ENCODE measurements at regions of chr3 and their contacts with region 1.

Region 1: GRCh38 chr3:177050501-177051237 is 146.6 kb downstream of the TBL1XR1 start:
- DNase-seq: peak in 2 of 35 experiments; percentile 8 to 77
- ATAC-seq: peak; percentile 63 to 87 (median 66)
- H3K4me3 ChIP-seq: no peak overlapping the region
- H3K4me3 Mint-ChIP-seq: no peak overlapping the region
- H3K27ac ChIP-seq: no peak overlapping the region
- H3K27ac Mint-ChIP-seq: no peak overlapping the region
- H3K4me1 ChIP-seq: peaks cover 0 to 3% of the 10 kb centered on the region in 2 experiments
- H3K4me1 Mint-ChIP-seq: peaks cover 17 to 24% (median 19%) of the 10 kb centered on the region in 3 donors
- H3K27me3 ChIP-seq: no peaks in the 10 kb centered on the region
- H3K27me3 Mint-ChIP-seq: no peaks in the 10 kb centered on the region

Region 2: DNA sequence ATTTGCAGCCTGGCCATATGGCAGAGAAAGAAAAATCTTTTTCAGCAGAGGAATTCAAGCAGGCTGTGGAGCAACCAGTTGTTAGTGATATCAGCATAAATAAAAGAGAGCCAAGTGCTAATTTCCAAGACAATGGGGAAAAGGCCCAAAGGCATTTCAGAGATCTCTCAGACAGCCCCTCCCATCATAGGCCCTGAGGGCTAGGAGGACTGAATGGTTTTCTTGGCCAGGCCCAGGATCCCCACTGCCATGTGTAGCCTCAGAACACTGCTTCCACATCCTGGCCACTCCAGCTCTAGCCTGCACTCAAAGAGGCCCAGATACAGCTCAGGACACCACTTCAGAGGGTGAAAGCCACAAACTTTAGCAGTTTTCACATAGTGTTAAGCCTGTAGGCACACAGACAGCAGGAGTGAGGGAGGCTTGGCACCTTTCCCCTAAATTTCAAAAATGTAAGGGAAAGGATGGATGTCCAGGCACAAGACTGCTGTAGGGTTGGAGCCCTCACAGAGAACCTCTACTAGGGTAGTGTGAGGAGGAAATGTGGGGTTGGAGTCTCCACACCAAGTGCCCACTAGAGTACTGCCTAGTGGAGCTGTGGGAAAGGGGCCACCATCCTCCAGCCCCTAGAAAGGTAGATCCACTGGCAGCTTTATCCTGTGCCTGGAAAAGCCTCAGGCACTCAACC is 44.8 kb before region 1 on chr3:
- CTCF ChIA-PET with region 1: no interaction called
- POLR2A ChIA-PET with region 1: no interaction called
- DNase-seq: no peak
- ATAC-seq: no peak
- H3K4me3 ChIP-seq: no peak overlapping the region
- H3K4me3 Mint-ChIP-seq: no peak overlapping the region
- H3K27ac ChIP-seq: no peak overlapping the region
- H3K27ac Mint-ChIP-seq: no peak overlapping the region
- H3K4me1 ChIP-seq: no peaks in the 10 kb centered on the region
- H3K4me1 Mint-ChIP-seq: no peaks in the 10 kb centered on the region
- H3K27me3 ChIP-seq: no peaks in the 10 kb centered on the region
- H3K27me3 Mint-ChIP-seq: no peaks in the 10 kb centered on the region

Region 3: DNA sequence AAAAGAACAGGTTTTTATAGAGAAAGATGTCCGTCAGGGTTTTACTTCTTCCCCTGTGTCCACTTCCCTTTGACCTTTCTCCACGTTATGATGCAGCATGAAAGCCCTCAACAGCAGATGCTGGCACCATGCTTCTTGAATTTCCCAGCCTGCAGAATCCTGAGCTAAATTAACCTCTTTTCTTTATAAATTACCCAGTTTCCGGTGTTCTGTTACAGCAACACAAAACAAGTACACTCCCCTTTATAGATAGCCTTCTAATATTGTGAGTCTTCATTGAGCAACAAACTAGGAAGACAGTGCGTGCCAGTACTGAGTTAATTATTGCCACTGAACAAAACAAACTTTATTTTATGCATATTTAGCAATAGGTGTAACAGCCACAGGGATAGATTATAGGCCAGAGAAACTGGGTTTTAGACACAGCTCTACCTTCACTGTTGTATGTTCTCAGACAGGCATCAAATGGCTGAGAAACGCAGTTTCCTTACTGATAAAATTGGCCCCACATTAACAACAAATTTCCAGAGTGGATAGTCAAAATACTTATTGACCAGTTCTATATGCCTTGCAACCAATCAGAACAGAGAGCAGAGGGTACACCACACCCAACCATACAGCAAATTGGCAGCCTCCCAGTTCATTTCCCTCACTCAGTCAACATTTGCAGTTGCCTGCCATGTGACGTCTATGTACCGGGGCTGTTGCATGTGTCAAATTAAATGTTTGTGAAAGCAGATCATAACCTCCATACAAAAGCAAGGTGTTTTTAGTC is 161.0 kb after region 1 on chr3:
- CTCF ChIA-PET with region 1: no interaction called
- POLR2A ChIA-PET with region 1: no interaction called
- DNase-seq: peak in 1 of 35 experiments; percentile 19
- ATAC-seq: peak in 2 of 4 experiments; percentile 27 to 71
- H3K4me3 ChIP-seq: no peak overlapping the region
- H3K4me3 Mint-ChIP-seq: no peak overlapping the region
- H3K27ac ChIP-seq: no peak overlapping the region
- H3K27ac Mint-ChIP-seq: peak overlapping the region in 1 of 2 donors; percentile 55
- H3K4me1 ChIP-seq: no peaks in the 10 kb centered on the region
- H3K4me1 Mint-ChIP-seq: peaks cover 4 to 6% (median 5%) of the 10 kb centered on the region in 3 donors
- H3K27me3 ChIP-seq: no peaks in the 10 kb centered on the region
- H3K27me3 Mint-ChIP-seq: no peaks in the 10 kb centered on the region

Region 4: GRCh38 chr3:177359593-177360357 is 309.1 kb after region 1 on chr3:
- CTCF ChIA-PET with region 1: interaction called, 3 to 17 read pairs
- POLR2A ChIA-PET with region 1: interaction called in 1 of 2 experiments, 22 read pairs
- DNase-seq: peak; percentile 89 to 98 (median 95)
- ATAC-seq: peak; percentile 83 to 90 (median 86)
- H3K4me3 ChIP-seq: peak overlapping the region; percentile 72 to 83
- H3K4me3 Mint-ChIP-seq: peak overlapping the region; percentile 82 to 89 (median 87)
- H3K27ac ChIP-seq: peak overlapping the region; percentile 98
- H3K27ac Mint-ChIP-seq: peak overlapping the region; percentile 98 to 99
- H3K4me1 ChIP-seq: peaks cover 25 to 39% of the 10 kb centered on the region in 2 experiments
- H3K4me1 Mint-ChIP-seq: peaks cover 51 to 57% (median 52%) of the 10 kb centered on the region in 3 donors
- H3K27me3 ChIP-seq: no peaks in the 10 kb centered on the region
- H3K27me3 Mint-ChIP-seq: peaks cover 0 to 1% of the 10 kb centered on the region in 2 donors

Region 5: GRCh38 chr3:177777699-177778098 is 727.0 kb after region 1 on chr3:
- CTCF ChIA-PET with region 1: interaction called, 4 to 24 read pairs
- POLR2A ChIA-PET with region 1: no interaction called
- DNase-seq: peak in 20 of 35 experiments; percentile 1 to 47 (median 14)
- ATAC-seq: peak in 3 of 4 experiments; percentile 46 to 56 (median 48)
- H3K4me3 ChIP-seq: no peak overlapping the region
- H3K4me3 Mint-ChIP-seq: no peak overlapping the region
- H3K27ac ChIP-seq: no peak overlapping the region
- H3K27ac Mint-ChIP-seq: peak overlapping the region; percentile 49 to 57
- H3K4me1 ChIP-seq: peaks cover 8 to 16% of the 10 kb centered on the region in 2 experiments
- H3K4me1 Mint-ChIP-seq: peaks cover 16 to 19% (median 17%) of the 10 kb centered on the region in 3 donors
- H3K27me3 ChIP-seq: no peaks in the 10 kb centered on the region
- H3K27me3 Mint-ChIP-seq: no peaks in the 10 kb centered on the region

Region 6: DNA sequence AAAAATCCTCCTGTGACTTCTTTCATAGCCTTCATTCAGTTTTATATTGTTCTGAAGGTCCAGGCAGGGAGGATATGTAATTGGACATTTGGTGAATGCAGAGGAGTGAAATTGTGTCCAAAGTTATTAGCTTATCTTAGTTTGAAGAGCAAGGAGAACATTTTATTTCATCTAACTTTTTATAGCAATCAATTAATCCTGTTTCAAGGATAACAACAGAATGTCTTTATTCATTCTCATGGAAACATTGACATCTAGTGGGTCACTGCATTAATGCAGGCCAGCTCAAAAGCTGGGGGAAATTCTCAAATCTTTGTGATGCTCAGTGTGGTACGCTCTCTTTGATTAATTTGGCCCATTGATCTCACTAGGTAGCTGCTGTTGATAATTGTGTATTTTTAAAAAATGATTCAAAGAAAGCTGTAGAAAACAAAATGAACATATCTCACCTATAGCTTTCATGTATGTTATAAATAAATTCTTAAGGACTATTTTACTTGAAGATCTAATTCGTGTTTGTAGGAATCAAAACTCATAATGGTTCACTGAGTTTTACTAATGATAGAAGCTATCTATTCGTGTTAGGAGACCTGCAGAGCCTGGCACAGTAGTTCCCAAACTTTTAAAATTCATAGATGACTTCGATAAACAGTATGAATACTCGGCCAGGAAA is 1334.7 kb after region 1 on chr3:
- CTCF ChIA-PET with region 1: interaction called, 3 to 25 read pairs
- POLR2A ChIA-PET with region 1: no interaction called
- DNase-seq: peak in 8 of 35 experiments; percentile 1 to 55 (median 10)
- ATAC-seq: no peak
- H3K4me3 ChIP-seq: no peak overlapping the region
- H3K4me3 Mint-ChIP-seq: no peak overlapping the region
- H3K27ac ChIP-seq: no peak overlapping the region
- H3K27ac Mint-ChIP-seq: no peak overlapping the region
- H3K4me1 ChIP-seq: no peaks in the 10 kb centered on the region
- H3K4me1 Mint-ChIP-seq: no peaks in the 10 kb centered on the region
- H3K27me3 ChIP-seq: no peaks in the 10 kb centered on the region
- H3K27me3 Mint-ChIP-seq: peaks cover 9% of the 10 kb centered on the region in 2 donors